IMR-90 (cell line): ENCODE measurements at regions of chr14 and their contacts with region 1.

Region 1: GRCh38 chr14:24984846-24985589 is 64.9 kb downstream of the STXBP6 start:
- DNase-seq: no peak
- ATAC-seq: no peak
- H3K4me3 ChIP-seq: no peak overlapping the region
- H3K27ac ChIP-seq: no peak overlapping the region
- H3K4me1 ChIP-seq: peaks cover 5% of the 10 kb centered on the region
- H3K27me3 ChIP-seq: peaks cover 6% of the 10 kb centered on the region
- CTCF ChIP-seq: no peak
- POLR2A ChIP-seq: no peak
- RAD21 ChIP-seq: no peak

Region 2: GRCh38 chr14:24665440-24665991 is 319.5 kb before region 1 on chr14:
- CTCF ChIA-PET with region 1: no interaction called
- POLR2A ChIA-PET with region 1: no interaction called
- dilution Hi-C with region 1: no loop called
- in situ Hi-C with region 1: no loop called
- intact Hi-C with region 1: no loop called
- DNase-seq: no peak
- ATAC-seq: no peak
- H3K4me3 ChIP-seq: no peak overlapping the region
- H3K27ac ChIP-seq: no peak overlapping the region
- H3K4me1 ChIP-seq: no peaks in the 10 kb centered on the region
- H3K27me3 ChIP-seq: no peaks in the 10 kb centered on the region
- CTCF ChIP-seq: no peak
- POLR2A ChIP-seq: no peak
- RAD21 ChIP-seq: no peak

Region 3: GRCh38 chr14:24843494-24843893 is 141.5 kb before region 1 on chr14:
- CTCF ChIA-PET with region 1: no interaction called
- POLR2A ChIA-PET with region 1: no interaction called
- dilution Hi-C with region 1: no loop called
- in situ Hi-C with region 1: no loop called
- intact Hi-C with region 1: loop called (anchors 5 kb)
- DNase-seq: no peak
- ATAC-seq: no peak
- H3K4me3 ChIP-seq: no peak overlapping the region
- H3K27ac ChIP-seq: no peak overlapping the region
- H3K4me1 ChIP-seq: 0 out of 2 replicates have a peak, but pooled peaks cover 1% of the 10 kb centered on the region
- H3K27me3 ChIP-seq: no peaks in the 10 kb centered on the region
- CTCF ChIP-seq: no peak
- POLR2A ChIP-seq: no peak
- RAD21 ChIP-seq: no peak

Region 4: GRCh38 chr14:24965934-24966578 is 19.0 kb before region 1 on chr14:
- CTCF ChIA-PET with region 1: no interaction called
- POLR2A ChIA-PET with region 1: no interaction called
- dilution Hi-C with region 1: no loop called
- in situ Hi-C with region 1: no loop called
- intact Hi-C with region 1: loop called (anchors 2 kb)
- DNase-seq: peak; percentile 90
- ATAC-seq: peak; percentile 90
- H3K4me3 ChIP-seq: peak overlapping the region; percentile 3; the same call in 1 of the 2 replicates
- H3K27ac ChIP-seq: peak overlapping the region; percentile 54; the same call in 1 of the 2 replicates
- H3K4me1 ChIP-seq: peaks cover 3% of the 10 kb centered on the region
- H3K27me3 ChIP-seq: no peaks in the 10 kb centered on the region
- CTCF ChIP-seq: no peak
- POLR2A ChIP-seq: no peak
- RAD21 ChIP-seq: no peak

Region 5: DNA sequence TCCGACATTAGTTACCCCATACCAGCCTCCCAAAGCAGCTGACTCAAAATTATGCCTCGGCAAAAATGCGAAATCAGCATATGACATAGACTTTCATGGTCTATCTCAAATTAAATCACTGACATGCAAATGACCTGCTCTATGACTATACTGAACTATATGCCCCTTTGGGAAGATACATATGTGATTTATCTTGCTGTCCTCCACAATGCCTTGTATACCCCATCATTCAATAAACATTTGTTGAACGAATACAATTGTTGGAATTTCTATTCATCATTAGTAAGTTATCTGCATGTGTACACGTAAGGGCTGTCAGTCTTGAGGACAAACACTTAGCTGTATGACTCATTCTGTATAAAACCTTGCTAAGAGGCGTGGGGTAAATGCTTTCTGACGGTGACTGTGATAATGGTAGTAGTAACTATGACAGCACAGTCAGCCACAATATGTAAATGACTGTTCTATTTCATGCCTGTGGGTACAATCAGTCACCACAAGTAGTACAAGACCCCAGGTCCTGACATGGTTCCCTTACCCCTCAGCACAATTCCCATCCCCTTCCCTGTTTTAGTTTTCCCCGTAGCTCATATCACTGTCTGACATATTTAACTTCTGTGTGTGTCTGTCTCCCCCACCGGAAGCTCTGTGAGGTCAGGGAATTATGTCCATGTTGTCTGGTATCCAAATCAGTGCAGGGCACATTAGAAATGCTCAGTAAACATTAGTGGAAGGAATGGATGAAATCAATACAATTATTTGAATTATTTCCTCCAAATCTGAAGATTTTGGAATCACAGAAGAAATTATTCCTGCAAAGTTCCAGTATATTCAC is 22.2 kb after region 1 on chr14:
- CTCF ChIA-PET with region 1: no interaction called
- POLR2A ChIA-PET with region 1: no interaction called
- dilution Hi-C with region 1: no loop called
- in situ Hi-C with region 1: no loop called
- intact Hi-C with region 1: loop called (anchors 1 kb)
- DNase-seq: peak; percentile 95
- ATAC-seq: peak; percentile 82
- H3K4me3 ChIP-seq: no peak overlapping the region
- H3K27ac ChIP-seq: no peak overlapping the region
- H3K4me1 ChIP-seq: peaks cover 16% of the 10 kb centered on the region
- H3K27me3 ChIP-seq: no peaks in the 10 kb centered on the region
- CTCF ChIP-seq: no peak
- POLR2A ChIP-seq: no peak
- RAD21 ChIP-seq: 0 out of 2 replicates have a peak, but pooled peaks have one; percentile 4